ENCODE measurements at regions of chr15 and their contacts with region 1.

Region 1: GRCh38 chr15:42313463-42313862 is 40.2 kb upstream of the TMEM87A start:
- DNase-seq: peak; percentile 24
- ATAC-seq: peak; percentile 92
- H3K4me3 ChIP-seq: no peak overlapping the region
- H3K27ac ChIP-seq: no peak overlapping the region
- H3K4me1 ChIP-seq: peaks cover 15% of the 10 kb centered on the region
- H3K27me3 ChIP-seq: no peaks in the 10 kb centered on the region
- CTCF ChIP-seq: peak; percentile 67
- EP300 ChIP-seq: no peak
- POLR2A ChIP-seq: no peak
- RAD21 ChIP-seq: peak; percentile 25; the same call in 1 of the 2 replicates

Region 2: GRCh38 chr15:42267286-42267685 is 46.2 kb before region 1 on chr15:
- CTCF ChIA-PET with region 1: no interaction called
- POLR2A ChIA-PET with region 1: no interaction called
- in situ Hi-C with region 1: no loop called
- intact Hi-C with region 1: loop called (anchors 10 kb)
- DNase-seq: no peak
- ATAC-seq: no peak
- H3K4me3 ChIP-seq: no peak overlapping the region
- H3K27ac ChIP-seq: no peak overlapping the region
- H3K4me1 ChIP-seq: peaks cover 29% of the 10 kb centered on the region
- H3K27me3 ChIP-seq: no peaks in the 10 kb centered on the region
- CTCF ChIP-seq: no peak
- EP300 ChIP-seq: no peak
- POLR2A ChIP-seq: no peak
- RAD21 ChIP-seq: no peak

Measured in HepG2 (cell line).